ENCODE measurements at regions of chr1 and their contacts with region 1.

Region 1: DNA sequence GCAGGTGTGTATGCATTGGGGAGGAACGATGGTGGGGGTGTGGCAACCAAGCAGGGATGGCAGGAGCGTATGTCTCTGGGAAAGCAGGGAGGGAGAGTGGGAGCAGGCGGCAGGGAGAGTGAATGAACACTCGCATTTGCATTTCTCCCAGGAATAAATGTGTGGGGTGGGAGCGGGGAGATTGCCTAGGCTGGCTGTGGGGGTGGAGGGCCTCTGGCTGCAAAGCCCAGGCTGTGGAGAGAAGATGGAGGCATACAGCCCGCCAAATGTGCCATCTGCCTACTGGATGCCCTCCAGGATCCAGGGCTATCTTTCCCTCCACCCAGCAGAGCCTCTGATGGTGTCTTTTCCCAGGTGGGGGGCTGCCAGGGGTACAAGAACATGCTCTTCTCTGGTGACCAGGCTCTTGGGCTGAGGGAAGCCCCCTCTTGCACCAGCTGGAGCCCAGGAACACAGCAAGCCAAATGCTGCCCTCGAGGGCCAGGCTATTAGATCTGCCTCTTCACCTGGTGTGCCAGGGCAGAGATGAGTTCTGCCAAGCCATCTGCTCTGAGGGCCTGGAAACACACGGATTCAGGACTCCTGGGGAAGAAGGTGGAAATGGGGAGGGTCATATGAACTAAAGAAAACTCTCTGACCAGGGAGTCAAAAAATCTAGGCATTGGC is 1.7 kb upstream of the OPTC start:
- DNase-seq: no peak
- ATAC-seq: no peak
- H3K4me3 ChIP-seq: no peak overlapping the region
- H3K27ac ChIP-seq: no peak overlapping the region
- H3K4me1 ChIP-seq: no peaks in the 10 kb centered on the region
- H3K27me3 ChIP-seq: no peaks in the 10 kb centered on the region
- CTCF ChIP-seq: no peak
- POLR2A ChIP-seq: no peak

Region 2: GRCh38 chr1:202901555-202901954 is 590.7 kb before region 1 on chr1:
- intact Hi-C with region 1: no loop called
- DNase-seq: no peak
- ATAC-seq: no peak
- H3K4me3 ChIP-seq: no peak overlapping the region
- H3K27ac ChIP-seq: no peak overlapping the region
- H3K4me1 ChIP-seq: no peaks in the 10 kb centered on the region
- H3K27me3 ChIP-seq: no peaks in the 10 kb centered on the region
- CTCF ChIP-seq: no peak
- POLR2A ChIP-seq: no peak

Region 3: DNA sequence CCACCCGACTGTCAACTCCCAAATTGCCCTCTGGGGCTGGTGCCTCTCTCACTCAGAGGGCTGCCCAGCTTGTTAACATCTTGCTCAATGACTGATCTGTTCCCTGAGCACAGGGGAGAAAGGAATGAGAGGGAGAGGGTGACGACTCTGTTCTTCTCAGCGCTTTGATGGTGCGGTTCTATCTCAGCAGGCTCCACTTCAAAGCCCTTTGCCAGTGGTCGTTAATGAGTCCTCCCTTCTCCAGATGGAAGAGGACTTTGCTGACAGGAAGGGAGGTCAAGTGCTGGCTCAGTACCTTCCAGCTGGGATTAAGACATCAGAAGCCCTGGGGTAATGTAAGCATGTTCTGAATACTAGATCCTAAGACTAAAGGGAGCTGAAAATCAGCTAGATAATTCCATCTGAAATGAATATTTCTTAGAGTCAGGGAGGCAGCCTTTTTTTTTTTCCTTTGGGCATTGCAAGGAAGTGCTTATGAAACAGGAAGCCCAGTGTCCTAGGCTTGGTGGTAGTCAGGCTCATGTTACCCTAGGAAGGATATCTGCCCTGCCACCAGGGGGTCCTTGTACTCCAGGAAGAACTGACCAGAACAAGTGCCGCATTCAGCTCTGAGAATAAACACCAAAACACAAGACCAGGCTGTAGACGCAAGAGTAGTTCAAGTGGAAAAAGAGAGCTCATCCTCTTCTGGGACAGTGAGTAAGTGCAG is 146.0 kb before region 1 on chr1:
- intact Hi-C with region 1: loop called (anchors 5 kb)
- DNase-seq: no peak
- ATAC-seq: no peak
- H3K4me3 ChIP-seq: no peak overlapping the region
- H3K27ac ChIP-seq: no peak overlapping the region
- H3K4me1 ChIP-seq: peaks cover 0 to 2% (median 0%) of the 10 kb centered on the region in 4 donors
- H3K27me3 ChIP-seq: no peaks in the 10 kb centered on the region
- CTCF ChIP-seq: no peak
- POLR2A ChIP-seq: no peak

Region 4: GRCh38 chr1:203888807-203889251 is 396.6 kb after region 1 on chr1:
- intact Hi-C with region 1: no loop called
- DNase-seq: no peak
- ATAC-seq: peak in 3 of 4 donors; percentile 24 to 43 (median 35)
- H3K4me3 ChIP-seq: no peak overlapping the region
- H3K27ac ChIP-seq: no peak overlapping the region
- H3K4me1 ChIP-seq: peaks cover 0 to 7% (median 0%) of the 10 kb centered on the region in 4 donors
- H3K27me3 ChIP-seq: no peaks in the 10 kb centered on the region
- CTCF ChIP-seq: no peak
- POLR2A ChIP-seq: no peak